A549 (cell line): ENCODE measurements at regions of chr17 and their contacts with region 1.

Region 1: GRCh38 chr17:37650419-37651003 is 7.3 kb upstream of the DDX52 start:
- DNase-seq: peak; percentile 67 to 76
- ATAC-seq: peak; percentile 78 to 91
- H3K4me3 ChIP-seq: no peak overlapping the region
- H3K27ac ChIP-seq: no peak overlapping the region
- H3K4me1 ChIP-seq: peaks cover 8% of the 10 kb centered on the region
- CTCF ChIP-seq: peak; percentile 90
- EP300 ChIP-seq: no peak
- POLR2A ChIP-seq: no peak
- RAD21 ChIP-seq: peak; percentile 92 to 95

Region 2: DNA sequence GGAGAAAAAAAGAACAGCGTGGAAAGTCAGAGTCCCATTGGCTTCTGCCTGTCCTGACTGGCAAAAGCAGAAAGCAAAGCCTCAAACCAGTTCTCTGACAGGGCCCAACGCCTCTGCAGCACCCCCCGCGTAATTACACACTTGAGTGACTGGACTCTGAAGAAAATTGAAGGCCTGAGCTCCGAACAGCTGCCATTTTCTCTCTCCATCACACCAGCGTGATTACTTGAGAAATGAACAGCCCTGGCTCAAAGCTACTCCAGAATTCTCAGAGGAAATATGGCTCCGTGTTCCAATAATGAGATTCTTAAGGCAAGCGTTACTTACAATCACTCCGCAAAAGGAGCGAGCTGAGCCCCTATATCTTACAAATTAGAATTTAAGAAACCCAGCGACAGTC is 417.5 kb before region 1 on chr17:
- CTCF ChIA-PET with region 1: no interaction called
- POLR2A ChIA-PET with region 1: no interaction called
- DNase-seq: no peak
- ATAC-seq: no peak
- H3K4me3 ChIP-seq: no peak overlapping the region
- H3K27ac ChIP-seq: no peak overlapping the region
- H3K4me1 ChIP-seq: no peaks in the 10 kb centered on the region
- CTCF ChIP-seq: no peak
- EP300 ChIP-seq: no peak
- POLR2A ChIP-seq: no peak
- RAD21 ChIP-seq: no peak

Region 3: GRCh38 chr17:37683454-37683984 is 33.0 kb after region 1 on chr17:
- CTCF ChIA-PET with region 1: interaction called, 11 read pairs
- POLR2A ChIA-PET with region 1: no interaction called
- DNase-seq: no peak
- ATAC-seq: no peak
- H3K4me3 ChIP-seq: no peak overlapping the region
- H3K27ac ChIP-seq: no peak overlapping the region
- H3K4me1 ChIP-seq: peaks cover 7% of the 10 kb centered on the region; the same call in 2 of the 3 replicates
- CTCF ChIP-seq: no peak
- EP300 ChIP-seq: no peak
- POLR2A ChIP-seq: no peak
- RAD21 ChIP-seq: no peak

Region 4: DNA sequence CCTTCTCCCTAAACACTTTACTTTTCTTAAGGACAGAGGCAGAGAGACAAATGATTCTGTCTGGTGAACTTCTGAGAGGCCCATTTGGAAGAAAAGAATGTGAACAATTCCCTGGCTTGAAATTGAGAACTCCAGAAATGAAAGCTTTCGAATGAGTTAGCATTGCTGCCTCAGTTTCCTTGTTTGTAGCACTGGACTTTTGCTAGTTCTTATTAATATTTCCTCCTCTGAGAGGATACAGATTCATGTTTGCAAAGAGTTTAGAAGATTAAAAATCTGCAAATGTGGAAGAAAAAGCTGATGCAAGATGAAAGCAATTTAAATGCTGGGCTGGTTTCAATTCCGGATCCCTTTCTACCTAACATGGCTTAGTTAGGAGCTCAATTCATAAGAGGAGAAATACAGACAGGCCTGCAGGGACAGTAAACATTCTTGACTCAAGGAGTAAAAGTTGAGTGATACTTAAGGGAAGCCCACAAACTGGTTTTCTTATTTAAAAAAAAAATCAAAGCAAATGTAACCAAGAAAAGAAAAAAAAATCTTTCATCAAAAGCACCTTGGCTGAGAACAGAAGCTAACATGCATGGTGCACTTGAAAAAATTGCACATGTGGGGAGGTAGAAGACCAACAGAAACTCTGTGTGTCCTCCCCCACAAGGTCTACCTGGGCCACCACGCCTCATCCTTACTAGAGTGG is 67.3 kb after region 1 on chr17:
- CTCF ChIA-PET with region 1: interaction called, 11 read pairs
- POLR2A ChIA-PET with region 1: no interaction called
- DNase-seq: no peak
- ATAC-seq: no peak
- H3K4me3 ChIP-seq: peak overlapping the region; percentile 22
- H3K27ac ChIP-seq: peak overlapping the region; percentile 89 to 95
- H3K4me1 ChIP-seq: peaks cover 74% of the 10 kb centered on the region
- CTCF ChIP-seq: no peak
- EP300 ChIP-seq: no peak
- POLR2A ChIP-seq: no peak
- RAD21 ChIP-seq: no peak

Region 5: GRCh38 chr17:37752482-37752881 is 102.0 kb after region 1 on chr17:
- CTCF ChIA-PET with region 1: interaction called, 66 read pairs
- POLR2A ChIA-PET with region 1: no interaction called
- DNase-seq: peak; percentile 80 to 85
- ATAC-seq: peak; percentile 91 to 92
- H3K4me3 ChIP-seq: no peak overlapping the region
- H3K27ac ChIP-seq: peak overlapping the region; percentile 65 to 78
- H3K4me1 ChIP-seq: peaks cover 39% of the 10 kb centered on the region
- CTCF ChIP-seq: no peak
- EP300 ChIP-seq: no peak
- POLR2A ChIP-seq: no peak
- RAD21 ChIP-seq: no peak

Region 6: GRCh38 chr17:37779554-37779953 is 129.0 kb after region 1 on chr17:
- CTCF ChIA-PET with region 1: interaction called, 10 read pairs
- POLR2A ChIA-PET with region 1: no interaction called
- DNase-seq: no peak
- ATAC-seq: peak; percentile 19 to 58; a peak in 2 of 6 replicates
- H3K4me3 ChIP-seq: no peak overlapping the region
- H3K27ac ChIP-seq: no peak overlapping the region
- H3K4me1 ChIP-seq: peaks cover 13% of the 10 kb centered on the region
- CTCF ChIP-seq: no peak
- EP300 ChIP-seq: no peak
- POLR2A ChIP-seq: no peak
- RAD21 ChIP-seq: no peak

Region 7: GRCh38 chr17:37833237-37833859 is 182.8 kb after region 1 on chr17:
- CTCF ChIA-PET with region 1: interaction called, 10 read pairs
- POLR2A ChIA-PET with region 1: no interaction called
- DNase-seq: no peak
- ATAC-seq: no peak
- H3K4me3 ChIP-seq: no peak overlapping the region
- H3K27ac ChIP-seq: no peak overlapping the region
- H3K4me1 ChIP-seq: peaks cover 9% of the 10 kb centered on the region
- CTCF ChIP-seq: no peak
- EP300 ChIP-seq: no peak
- POLR2A ChIP-seq: no peak
- RAD21 ChIP-seq: no peak